PC-9 (cell line): ENCODE measurements at regions of chr15 and their contacts with region 1.

Region 1: DNA sequence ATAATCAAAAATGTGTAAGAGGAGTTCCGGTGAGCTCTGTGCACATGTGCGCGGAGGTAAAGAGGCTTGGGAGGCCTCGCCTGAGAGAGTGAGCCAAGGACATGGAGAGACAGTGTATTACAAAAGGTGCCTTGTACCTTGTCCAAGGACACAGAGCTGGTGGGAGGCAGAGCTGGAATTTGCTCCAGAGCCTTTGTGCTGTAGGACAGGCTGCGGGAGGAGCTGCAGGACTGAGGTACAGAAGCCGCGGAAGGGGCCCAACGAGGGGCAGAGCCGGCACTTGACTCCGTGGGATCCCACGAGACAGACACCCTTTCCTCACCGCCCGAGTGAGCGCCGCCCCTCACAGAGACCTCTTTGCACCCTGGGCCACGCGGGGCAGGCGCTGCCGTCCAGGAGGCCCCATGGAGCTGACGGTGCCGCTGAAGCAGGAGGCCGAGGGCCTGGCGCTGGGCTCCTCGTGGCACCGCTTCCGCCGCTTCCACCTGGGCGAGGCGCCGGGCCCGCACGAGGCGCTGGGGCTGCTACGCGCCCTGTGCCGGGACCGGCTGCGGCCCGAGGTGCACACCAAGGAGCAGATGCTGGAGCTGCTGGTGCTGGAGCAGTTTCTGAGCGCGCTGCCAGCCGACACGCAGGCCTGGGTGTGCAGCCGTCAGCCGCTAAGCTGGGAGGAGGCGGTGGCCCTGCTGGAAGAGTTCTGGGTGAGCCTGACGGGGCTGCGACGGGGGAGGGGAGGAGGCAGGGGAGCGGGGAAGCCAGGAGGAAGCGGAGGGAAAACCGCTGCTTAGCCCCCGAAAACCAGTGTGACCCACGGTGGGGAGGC is 68.7 kb downstream of the SLTM start:
- DNase-seq: peak; percentile 47 to 54
- H3K4me3 ChIP-seq: peak overlapping the region; percentile 58
- H3K27ac ChIP-seq: peak overlapping the region; percentile 77
- H3K4me1 ChIP-seq: no peaks in the 10 kb centered on the region
- H3K27me3 ChIP-seq: no peaks in the 10 kb centered on the region
- CTCF ChIP-seq: no peak

Region 2: DNA sequence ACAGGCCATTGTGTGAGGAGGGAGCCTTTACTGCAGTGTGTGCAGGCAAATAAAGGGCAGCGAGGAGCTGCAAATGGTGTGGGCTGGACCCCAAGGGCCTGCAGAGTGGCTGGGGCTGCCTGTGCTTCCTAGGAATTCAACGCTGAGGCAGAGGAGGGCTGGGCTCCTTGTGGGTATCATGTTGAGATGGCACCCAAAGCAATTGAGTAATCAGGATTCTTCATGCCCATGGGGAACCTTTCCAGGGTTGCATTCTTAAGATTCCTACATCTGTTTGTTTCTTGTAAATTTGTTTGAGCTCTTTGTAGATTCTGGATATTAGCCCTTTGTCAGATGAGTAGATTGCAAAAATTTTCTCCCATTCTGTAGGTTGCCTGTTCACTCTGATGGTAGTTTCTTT is 518.4 kb before region 1 on chr15:
- CTCF ChIA-PET with region 1: no interaction called
- POLR2A ChIA-PET with region 1: interaction called, 3 read pairs
- intact Hi-C with region 1: loop called (anchors 5 kb)
- DNase-seq: peak; percentile 84 to 91
- H3K4me3 ChIP-seq: no peak overlapping the region
- H3K27ac ChIP-seq: peak overlapping the region; percentile 51
- H3K4me1 ChIP-seq: peaks cover 23% of the 10 kb centered on the region
- H3K27me3 ChIP-seq: no peaks in the 10 kb centered on the region
- CTCF ChIP-seq: no peak

Region 3: DNA sequence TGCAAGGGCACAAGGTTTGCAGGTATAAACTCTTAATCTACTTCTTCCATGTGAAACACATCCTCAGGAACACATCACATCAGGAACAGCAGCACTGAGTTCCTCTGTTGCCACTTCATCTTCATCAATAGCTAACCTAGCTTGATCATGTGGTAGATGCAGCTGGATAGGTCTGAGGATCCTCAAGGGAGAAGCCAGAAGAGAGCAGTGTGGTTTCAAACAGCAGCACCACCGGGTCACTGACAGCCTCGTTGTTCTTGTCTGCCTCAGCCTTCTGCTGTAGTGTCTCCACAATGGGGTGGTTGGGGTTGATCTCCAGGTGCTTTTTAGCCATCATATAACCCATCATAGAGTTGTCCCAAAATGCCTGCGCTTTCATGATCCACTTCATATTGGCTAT is 174.1 kb before region 1 on chr15:
- CTCF ChIA-PET with region 1: no interaction called
- POLR2A ChIA-PET with region 1: interaction called, 12 read pairs
- intact Hi-C with region 1: no loop called
- DNase-seq: no peak
- H3K4me3 ChIP-seq: no peak overlapping the region
- H3K27ac ChIP-seq: no peak overlapping the region
- H3K4me1 ChIP-seq: no peaks in the 10 kb centered on the region
- H3K27me3 ChIP-seq: no peaks in the 10 kb centered on the region
- CTCF ChIP-seq: no peak

Region 4: GRCh38 chr15:58724466-58724865 is 140.3 kb before region 1 on chr15:
- CTCF ChIA-PET with region 1: interaction called, 16 read pairs
- POLR2A ChIA-PET with region 1: no interaction called
- intact Hi-C with region 1: no loop called
- DNase-seq: peak in 1 of 2 experiments; percentile 35
- H3K4me3 ChIP-seq: no peak overlapping the region
- H3K27ac ChIP-seq: peak overlapping the region; percentile 43; the same call in 1 of the 2 replicates
- H3K4me1 ChIP-seq: no peaks in the 10 kb centered on the region
- H3K27me3 ChIP-seq: no peaks in the 10 kb centered on the region
- CTCF ChIP-seq: no peak

Region 5: GRCh38 chr15:58749532-58750337 is 115.1 kb before region 1 on chr15 and contains the start of gene ADAM10:
- CTCF ChIA-PET with region 1: interaction called, 4 read pairs
- POLR2A ChIA-PET with region 1: interaction called, 6 read pairs
- intact Hi-C with region 1: loop called (anchors 1 kb)
- DNase-seq: peak; percentile 89 to 98
- H3K4me3 ChIP-seq: peak within 1 kb of the TSS; percentile 97
- H3K27ac ChIP-seq: peak within 1 kb of the TSS; percentile 79
- H3K4me1 ChIP-seq: peaks cover 20% of the 10 kb centered on the region
- H3K27me3 ChIP-seq: no peaks in the 10 kb centered on the region
- CTCF ChIP-seq: no peak
- total RNA-seq, gene ADAM10: 160 and 239 TPM in 2 replicates

Region 6: DNA sequence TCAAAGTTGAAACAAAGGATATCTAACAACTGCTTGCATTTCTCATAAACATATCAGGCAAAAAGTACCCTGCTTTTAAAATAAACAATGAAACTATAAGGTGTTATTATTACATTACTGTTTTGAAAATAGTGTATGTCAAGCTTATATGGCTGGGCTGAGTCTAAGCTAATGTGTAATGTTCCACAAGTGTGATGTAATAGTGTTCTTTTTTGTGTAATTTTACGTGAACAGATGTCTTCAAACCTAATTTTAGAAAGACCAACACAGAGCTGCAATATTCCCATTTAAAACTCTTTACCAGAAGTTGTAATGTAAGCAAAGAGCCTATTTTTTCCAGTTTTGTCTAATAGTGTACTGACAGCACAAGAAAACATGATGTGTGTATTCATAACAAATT is 59.7 kb before region 1 on chr15:
- CTCF ChIA-PET with region 1: no interaction called
- POLR2A ChIA-PET with region 1: interaction called, 28 read pairs
- intact Hi-C with region 1: no loop called
- DNase-seq: no peak
- H3K4me3 ChIP-seq: no peak overlapping the region
- H3K27ac ChIP-seq: no peak overlapping the region
- H3K4me1 ChIP-seq: no peaks in the 10 kb centered on the region
- H3K27me3 ChIP-seq: no peaks in the 10 kb centered on the region
- CTCF ChIP-seq: no peak

Region 7: GRCh38 chr15:58880320-58880719 is 15.5 kb after region 1 on chr15:
- CTCF ChIA-PET with region 1: no interaction called
- POLR2A ChIA-PET with region 1: no interaction called
- intact Hi-C with region 1: no loop called
- DNase-seq: no peak
- H3K4me3 ChIP-seq: no peak overlapping the region
- H3K27ac ChIP-seq: no peak overlapping the region
- H3K4me1 ChIP-seq: no peaks in the 10 kb centered on the region
- H3K27me3 ChIP-seq: no peaks in the 10 kb centered on the region
- CTCF ChIP-seq: no peak